ENCODE measurements at regions of chr14 and their contacts with region 1.

Region 1: DNA sequence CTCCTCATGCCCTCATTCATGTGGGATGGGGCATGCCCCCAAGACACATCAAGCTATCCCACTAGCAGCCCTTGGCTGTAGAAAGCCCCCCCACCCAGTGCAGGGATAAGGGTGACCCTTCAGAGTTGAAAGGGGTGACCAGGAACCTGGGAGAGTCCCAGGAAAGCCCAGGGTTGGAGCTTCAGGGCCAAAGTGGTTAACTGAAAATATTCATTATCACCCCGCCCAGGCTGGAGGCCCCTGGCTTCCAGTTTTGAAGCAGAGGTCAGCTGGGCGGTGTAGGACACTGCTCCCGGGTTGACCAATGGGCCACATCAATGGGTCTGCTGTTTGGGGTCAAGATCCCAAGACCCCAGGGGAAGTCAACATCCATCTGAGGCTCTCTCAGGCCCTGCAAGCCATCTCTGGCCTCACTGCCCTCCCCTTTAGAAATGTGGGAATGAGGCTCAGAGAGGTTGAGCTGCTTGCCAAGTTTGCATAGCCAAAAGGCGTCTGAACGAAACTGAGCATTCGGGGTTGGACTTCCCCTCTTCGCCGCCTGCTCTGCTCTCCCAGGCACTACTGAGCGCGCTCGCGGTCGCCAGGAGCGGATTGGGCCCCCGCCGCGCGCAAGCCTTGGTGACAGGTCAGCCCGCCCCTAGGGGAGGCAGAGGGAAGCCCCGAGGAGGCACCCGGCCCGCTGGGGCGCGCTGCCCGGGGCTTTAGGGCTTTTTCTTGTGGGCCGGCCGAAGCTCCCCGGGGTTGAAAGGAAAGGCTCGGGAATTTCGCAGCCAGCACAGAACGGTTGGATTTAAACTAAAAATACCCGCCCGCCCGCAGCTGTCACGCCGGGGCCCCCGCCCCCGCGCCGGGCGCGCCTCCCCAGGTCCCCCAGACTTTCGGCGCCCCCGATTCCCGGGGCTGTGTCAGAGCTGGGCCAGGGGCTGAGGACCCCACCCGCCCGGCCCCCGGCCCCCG is 576 bp downstream of the SYNE3 start:
- DNase-seq: peak; percentile 39
- ATAC-seq: peak; percentile 92
- H3K4me3 ChIP-seq: peak overlapping the region; percentile 62 to 73 (median 62)
- H3K27ac ChIP-seq: peak overlapping the region; percentile 59
- H3K4me1 ChIP-seq: peaks cover 70% of the 10 kb centered on the region
- H3K27me3 ChIP-seq: no peaks in the 10 kb centered on the region; a peak in 1 of 5 replicates
- CTCF ChIP-seq: peak; percentile 51
- EP300 ChIP-seq: peak in 1 of 2 experiments; percentile 16; a peak in 1 of 4 replicates
- POLR2A ChIP-seq: no peak
- RAD21 ChIP-seq: peak; percentile 54; the same call in 1 of the 2 replicates

Region 2: GRCh38 chr14:95417492-95417891 is 98.4 kb before region 1 on chr14:
- CTCF ChIA-PET with region 1: no interaction called
- POLR2A ChIA-PET with region 1: no interaction called
- in situ Hi-C with region 1: no loop called
- intact Hi-C with region 1: no loop called
- DNase-seq: no peak
- ATAC-seq: no peak
- H3K4me3 ChIP-seq: no peak overlapping the region
- H3K27ac ChIP-seq: no peak overlapping the region
- H3K4me1 ChIP-seq: no peaks in the 10 kb centered on the region
- H3K27me3 ChIP-seq: no peaks in the 10 kb centered on the region
- CTCF ChIP-seq: no peak
- EP300 ChIP-seq: no peak
- POLR2A ChIP-seq: no peak
- RAD21 ChIP-seq: no peak

Region 3: GRCh38 chr14:95442633-95443021 is 73.2 kb before region 1 on chr14:
- CTCF ChIA-PET with region 1: no interaction called
- POLR2A ChIA-PET with region 1: interaction called, 13 read pairs
- in situ Hi-C with region 1: no loop called
- intact Hi-C with region 1: no loop called
- DNase-seq: peak; percentile 66
- ATAC-seq: peak; percentile 90
- H3K4me3 ChIP-seq: no peak overlapping the region
- H3K27ac ChIP-seq: peak overlapping the region; percentile 80
- H3K4me1 ChIP-seq: peaks cover 45% of the 10 kb centered on the region
- H3K27me3 ChIP-seq: no peaks in the 10 kb centered on the region
- CTCF ChIP-seq: peak; percentile 95
- EP300 ChIP-seq: no peak
- POLR2A ChIP-seq: no peak
- RAD21 ChIP-seq: peak; percentile 91

Region 4: GRCh38 chr14:95488376-95489213 is 27.3 kb before region 1 on chr14:
- CTCF ChIA-PET with region 1: no interaction called
- POLR2A ChIA-PET with region 1: no interaction called
- in situ Hi-C with region 1: no loop called
- intact Hi-C with region 1: loop called (anchors 5 kb)
- DNase-seq: no peak
- ATAC-seq: peak; percentile 65
- H3K4me3 ChIP-seq: no peak overlapping the region
- H3K27ac ChIP-seq: peak overlapping the region; percentile 58
- H3K4me1 ChIP-seq: peaks cover 50% of the 10 kb centered on the region
- H3K27me3 ChIP-seq: no peaks in the 10 kb centered on the region
- CTCF ChIP-seq: no peak
- EP300 ChIP-seq: no peak
- POLR2A ChIP-seq: no peak
- RAD21 ChIP-seq: no peak

Region 5: DNA sequence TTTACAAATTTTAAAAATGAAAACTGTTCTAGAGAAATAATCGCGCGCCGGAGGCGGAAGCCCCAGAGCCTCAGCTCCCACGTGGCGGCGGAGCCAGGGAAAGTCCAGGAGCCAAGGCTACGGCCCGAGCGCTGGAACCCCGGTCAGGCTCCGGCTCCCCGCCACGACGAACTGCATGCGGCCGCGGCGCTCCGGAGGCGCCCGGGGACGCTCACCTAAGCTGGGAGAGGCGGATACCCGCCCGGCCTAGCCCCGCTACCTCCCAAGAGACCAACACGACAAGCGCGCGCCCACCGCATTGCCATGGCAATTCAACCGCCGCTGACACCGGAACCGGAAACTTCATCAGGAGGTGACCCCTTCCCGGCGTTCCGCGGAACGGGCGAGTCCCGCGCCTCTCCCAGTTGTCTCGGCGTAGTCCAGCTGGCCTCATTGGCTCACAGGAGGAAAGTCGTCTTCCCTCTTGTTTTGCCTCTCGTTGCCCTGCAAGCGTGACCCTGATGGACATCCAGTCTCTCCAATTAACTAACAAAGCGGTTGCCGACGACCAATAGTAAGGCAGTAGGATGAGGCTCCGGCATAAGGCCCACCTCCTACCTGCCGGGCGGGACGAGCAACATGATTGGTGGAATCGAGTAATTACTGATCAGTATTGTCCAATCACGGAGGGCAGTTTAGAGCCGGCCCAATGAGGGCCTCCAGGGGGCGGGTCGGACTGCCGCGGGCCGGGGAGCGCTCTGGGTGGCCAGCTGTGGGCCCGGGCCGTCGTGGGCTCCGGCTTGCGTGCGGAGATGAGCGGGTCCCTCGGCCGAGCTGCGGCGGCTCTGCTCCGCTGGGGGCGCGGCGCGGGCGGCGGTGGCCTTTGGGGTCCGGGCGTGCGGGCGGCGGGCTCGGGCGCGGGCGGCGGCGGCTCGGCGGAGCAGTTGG is 18.7 kb after region 1 on chr14 and contains the start of gene GLRX5:
- CTCF ChIA-PET with region 1: no interaction called
- POLR2A ChIA-PET with region 1: interaction called, 25 read pairs
- in situ Hi-C with region 1: no loop called
- intact Hi-C with region 1: no loop called
- DNase-seq: peak; percentile 100
- ATAC-seq: peak; percentile 93
- H3K4me3 ChIP-seq: peak within 1 kb of the TSS; percentile 84 to 96 (median 88)
- H3K27ac ChIP-seq: peak within 1 kb of the TSS; percentile 87
- H3K4me1 ChIP-seq: peaks cover 49% of the 10 kb centered on the region
- H3K27me3 ChIP-seq: peaks cover 0 to 2% of the 10 kb centered on the region in 2 experiments; a peak in 1 of 5 replicates
- CTCF ChIP-seq: no peak
- EP300 ChIP-seq: peak in 1 of 2 experiments; percentile 13; a peak in 2 of 4 replicates
- POLR2A ChIP-seq: peak; percentile 62 to 74
- RAD21 ChIP-seq: peak; percentile 35; the same call in 1 of the 2 replicates
- total RNA-seq, gene GLRX5: 115 and 122 TPM in 2 replicates

Region 6: GRCh38 chr14:95577067-95577800 is 61.4 kb after region 1 on chr14:
- CTCF ChIA-PET with region 1: no interaction called
- POLR2A ChIA-PET with region 1: no interaction called
- in situ Hi-C with region 1: no loop called
- intact Hi-C with region 1: no loop called
- DNase-seq: no peak
- ATAC-seq: no peak
- H3K4me3 ChIP-seq: no peak overlapping the region
- H3K27ac ChIP-seq: no peak overlapping the region
- H3K4me1 ChIP-seq: peaks cover 6% of the 10 kb centered on the region; the same call in 1 of the 2 replicates
- H3K27me3 ChIP-seq: no peaks in the 10 kb centered on the region; a peak in 2 of 5 replicates
- CTCF ChIP-seq: no peak
- EP300 ChIP-seq: no peak
- POLR2A ChIP-seq: no peak
- RAD21 ChIP-seq: no peak